ENCODE measurements at regions of chr5 and their contacts with region 1.

Region 1: DNA sequence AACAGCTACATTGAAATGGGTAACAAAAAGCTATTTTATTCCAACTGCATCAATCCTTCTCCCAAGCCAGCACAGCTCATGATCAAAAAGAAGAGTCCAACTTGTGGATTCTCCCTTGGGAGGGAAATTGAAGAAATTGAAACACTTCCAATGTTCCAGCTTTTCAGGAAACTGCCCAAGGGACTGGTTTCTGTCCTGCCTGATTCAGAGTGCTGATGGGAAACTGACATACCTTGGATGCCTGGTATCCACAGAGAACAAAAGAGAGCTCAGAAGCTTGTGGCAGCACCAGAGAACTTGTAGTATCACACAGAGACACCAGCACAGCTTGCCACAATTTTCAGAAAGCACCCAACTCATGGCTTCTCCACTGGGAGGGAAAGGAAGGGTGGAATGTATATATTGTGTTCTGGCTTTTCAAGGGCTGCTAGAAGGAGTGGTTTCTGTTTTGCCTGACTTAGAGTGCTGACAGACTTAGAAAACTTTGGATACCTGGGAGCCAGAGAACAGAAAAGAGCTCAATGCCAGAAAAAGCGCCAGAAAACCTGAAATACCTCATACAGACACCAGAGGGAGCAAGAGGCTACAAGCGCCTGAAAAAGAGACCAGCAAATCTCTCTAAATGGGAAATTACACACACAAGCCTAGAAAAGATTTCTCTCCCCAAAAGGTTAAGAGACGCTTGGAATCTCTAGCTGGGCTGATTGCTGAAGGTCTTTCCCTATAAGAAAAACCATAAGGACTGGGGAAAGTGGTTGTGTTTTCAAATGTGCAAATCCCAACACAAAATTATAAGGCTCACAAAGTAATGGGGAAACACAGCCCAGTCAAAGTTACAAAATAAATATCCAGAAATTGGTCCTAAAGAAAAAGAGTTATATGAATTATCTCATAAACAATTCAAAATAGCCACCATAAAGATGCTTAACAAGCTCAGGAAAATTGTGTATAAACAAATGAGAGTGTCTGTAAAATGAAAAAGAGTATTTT is 178.8 kb downstream of the SPOCK1 start:
- DNase-seq: peak; percentile 41
- ATAC-seq: no peak
- H3K4me3 Mint-ChIP-seq: no peak overlapping the region
- H3K27ac Mint-ChIP-seq: no peak overlapping the region
- H3K4me1 Mint-ChIP-seq: no peaks in the 10 kb centered on the region
- H3K27me3 Mint-ChIP-seq: peaks cover 6% of the 10 kb centered on the region

Region 2: DNA sequence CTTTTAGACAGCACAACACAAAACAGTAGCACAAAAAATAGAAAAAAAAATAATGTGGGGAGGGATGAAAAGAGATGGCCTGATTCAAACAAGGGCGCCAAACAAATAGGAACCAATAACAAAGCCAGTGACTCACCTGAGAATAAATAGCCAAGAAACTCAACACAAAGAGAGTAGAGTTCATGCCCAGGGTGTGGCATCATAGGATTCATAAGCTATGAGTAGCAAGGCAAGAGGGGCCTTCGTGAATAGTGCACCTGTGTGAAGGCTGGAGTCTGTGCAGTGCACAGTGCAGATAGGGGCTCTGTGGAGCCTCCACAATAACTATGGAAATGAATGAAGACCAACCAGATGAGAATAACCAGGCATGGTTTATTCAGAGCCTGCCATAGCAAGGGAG is 362.9 kb before region 1 on chr5:
- CTCF ChIA-PET with region 1: no interaction called
- POLR2A ChIA-PET with region 1: no interaction called
- DNase-seq: no peak
- ATAC-seq: no peak
- H3K4me3 Mint-ChIP-seq: no peak overlapping the region
- H3K27ac Mint-ChIP-seq: no peak overlapping the region
- H3K4me1 Mint-ChIP-seq: no peaks in the 10 kb centered on the region
- H3K27me3 Mint-ChIP-seq: no peaks in the 10 kb centered on the region

Region 3: DNA sequence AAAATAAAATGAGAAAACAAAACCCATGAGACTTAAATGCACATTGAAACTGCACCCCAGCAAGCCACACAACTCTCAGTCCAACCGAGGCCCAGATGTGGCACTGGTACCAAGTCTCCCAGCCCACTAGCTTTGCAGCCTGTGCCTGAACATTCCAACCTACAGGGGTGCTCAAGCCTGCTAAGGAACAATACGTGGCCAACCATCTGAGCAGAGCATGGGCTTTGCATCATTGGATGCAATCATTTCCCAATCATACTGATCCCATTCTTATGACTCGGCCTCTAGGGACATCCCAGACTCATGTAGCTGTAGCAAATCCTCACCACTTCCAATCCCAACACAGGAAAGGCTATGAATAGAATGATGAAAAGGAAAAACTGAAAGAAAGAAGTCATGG is 118.5 kb before region 1 on chr5:
- CTCF ChIA-PET with region 1: no interaction called
- POLR2A ChIA-PET with region 1: no interaction called
- DNase-seq: no peak
- ATAC-seq: no peak
- H3K4me3 Mint-ChIP-seq: no peak overlapping the region
- H3K27ac Mint-ChIP-seq: no peak overlapping the region
- H3K4me1 Mint-ChIP-seq: no peaks in the 10 kb centered on the region
- H3K27me3 Mint-ChIP-seq: no peaks in the 10 kb centered on the region

Region 4: GRCh38 chr5:137310051-137310730 is 10.2 kb before region 1 on chr5:
- CTCF ChIA-PET with region 1: interaction called, 11 read pairs
- POLR2A ChIA-PET with region 1: no interaction called
- DNase-seq: no peak
- ATAC-seq: no peak
- H3K4me3 Mint-ChIP-seq: no peak overlapping the region
- H3K27ac Mint-ChIP-seq: no peak overlapping the region
- H3K4me1 Mint-ChIP-seq: no peaks in the 10 kb centered on the region
- H3K27me3 Mint-ChIP-seq: peaks cover 3% of the 10 kb centered on the region

Region 5: GRCh38 chr5:137498736-137499505 is 178.6 kb after region 1 on chr5 and contains the start of gene SPOCK1:
- CTCF ChIA-PET with region 1: interaction called, 35 read pairs
- POLR2A ChIA-PET with region 1: no interaction called
- DNase-seq: peak; percentile 67
- ATAC-seq: peak; percentile 97
- H3K4me3 Mint-ChIP-seq: no peak within 1 kb of the TSS
- H3K27ac Mint-ChIP-seq: no peak within 1 kb of the TSS
- H3K4me1 Mint-ChIP-seq: no peaks in the 10 kb centered on the region
- H3K27me3 Mint-ChIP-seq: peaks cover 25% of the 10 kb centered on the region
- total RNA-seq, gene SPOCK1: not detected

Region 6: DNA sequence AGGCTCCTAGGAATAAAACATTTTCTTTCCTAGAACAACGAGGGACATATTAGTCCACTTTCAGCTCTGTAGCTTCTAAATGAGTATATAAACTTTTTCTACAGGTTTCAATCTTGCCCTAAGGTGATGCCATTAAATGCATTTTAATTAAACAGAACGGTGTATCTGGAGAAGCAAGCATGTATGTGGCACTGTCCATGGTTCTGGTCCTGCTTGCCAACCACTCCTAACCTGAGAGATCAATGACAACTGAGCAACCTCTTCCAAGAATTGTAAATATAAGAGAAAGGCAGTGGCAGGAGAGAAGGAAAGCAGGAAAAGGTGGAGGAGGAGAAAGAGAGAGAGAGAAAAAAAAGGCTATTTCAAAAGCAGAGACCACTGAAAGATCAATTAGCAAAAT is 274.4 kb after region 1 on chr5:
- CTCF ChIA-PET with region 1: no interaction called
- POLR2A ChIA-PET with region 1: no interaction called
- DNase-seq: no peak
- ATAC-seq: no peak
- H3K4me3 Mint-ChIP-seq: no peak overlapping the region
- H3K27ac Mint-ChIP-seq: no peak overlapping the region
- H3K4me1 Mint-ChIP-seq: peaks cover 2% of the 10 kb centered on the region
- H3K27me3 Mint-ChIP-seq: peaks cover 28% of the 10 kb centered on the region

Measured in activated CD8-positive, alpha-beta T cell treated with anti-CD3 and anti-CD28 coated beads, Interleukin-2, amount 10 ng/mL, durations not matched to agents 7 days and 5 days (primary cell).